GM12878 (cell line): ENCODE measurements at regions of chr1 and their contacts with region 1.

Region 1: GRCh38 chr1:223142795-223143536 is at the start of gene TLR5:
- DNase-seq: peak; percentile 12
- ATAC-seq: peak; percentile 91
- H3K4me3 ChIP-seq: peak within 1 kb of the TSS; percentile 45
- H3K27ac ChIP-seq: no peak within 1 kb of the TSS
- H3K4me1 ChIP-seq: peaks cover 12% of the 10 kb centered on the region
- H3K27me3 ChIP-seq: no peaks in the 10 kb centered on the region
- CTCF ChIP-seq: peak; percentile 40 to 68 (median 44)
- EP300 ChIP-seq: no peak
- POLR2A ChIP-seq: peak; percentile 52; the same call in 1 of the 2 replicates
- RAD21 ChIP-seq: no peak
- polyA plus RNA-seq, gene TLR5: 0.34 to 0.51 TPM

Region 2: DNA sequence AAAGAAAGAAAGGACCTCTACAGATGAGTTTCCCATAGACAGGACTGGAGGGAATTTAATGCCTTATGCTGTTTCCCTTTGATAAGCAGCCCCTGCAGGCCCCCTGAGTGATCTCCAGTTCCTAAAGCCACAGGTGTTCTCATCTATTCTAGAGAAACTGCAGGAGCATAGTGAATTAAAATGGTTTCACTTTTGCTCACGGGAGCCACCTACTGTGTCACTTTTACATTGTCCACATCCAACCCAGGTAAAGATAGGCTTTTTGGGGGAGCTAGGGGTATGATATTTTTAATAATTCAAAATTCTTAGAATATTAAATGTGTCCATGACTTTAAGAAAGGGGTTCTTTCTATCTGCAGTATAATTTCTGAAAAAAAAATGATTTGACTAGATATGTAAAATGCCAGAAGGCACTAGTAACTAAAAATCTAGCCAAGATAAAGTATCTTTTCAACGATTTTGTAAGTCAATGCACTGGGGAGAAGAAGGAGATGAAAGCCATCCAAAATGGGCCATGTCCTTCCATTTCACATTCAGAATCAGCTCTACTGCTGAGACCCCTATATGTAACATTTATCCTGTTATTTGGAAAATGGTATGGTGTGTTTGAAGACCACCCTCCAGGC is 1133.7 kb before region 1 on chr1:
- CTCF ChIA-PET with region 1: no interaction called
- POLR2A ChIA-PET with region 1: no interaction called
- RAD21 ChIA-PET with region 1: no interaction called
- SMC1A ChIA-PET with region 1: no interaction called
- in situ Hi-C with region 1: no loop called
- intact Hi-C with region 1: no loop called
- DNase-seq: peak; percentile 36
- ATAC-seq: peak; percentile 95
- H3K4me3 ChIP-seq: no peak overlapping the region
- H3K27ac ChIP-seq: no peak overlapping the region
- H3K4me1 ChIP-seq: no peaks in the 10 kb centered on the region
- H3K27me3 ChIP-seq: no peaks in the 10 kb centered on the region
- CTCF ChIP-seq: peak; percentile 45 to 59 (median 48); a peak in 5 of 6 replicates
- EP300 ChIP-seq: no peak
- POLR2A ChIP-seq: no peak
- RAD21 ChIP-seq: peak; percentile 74

Region 3: DNA sequence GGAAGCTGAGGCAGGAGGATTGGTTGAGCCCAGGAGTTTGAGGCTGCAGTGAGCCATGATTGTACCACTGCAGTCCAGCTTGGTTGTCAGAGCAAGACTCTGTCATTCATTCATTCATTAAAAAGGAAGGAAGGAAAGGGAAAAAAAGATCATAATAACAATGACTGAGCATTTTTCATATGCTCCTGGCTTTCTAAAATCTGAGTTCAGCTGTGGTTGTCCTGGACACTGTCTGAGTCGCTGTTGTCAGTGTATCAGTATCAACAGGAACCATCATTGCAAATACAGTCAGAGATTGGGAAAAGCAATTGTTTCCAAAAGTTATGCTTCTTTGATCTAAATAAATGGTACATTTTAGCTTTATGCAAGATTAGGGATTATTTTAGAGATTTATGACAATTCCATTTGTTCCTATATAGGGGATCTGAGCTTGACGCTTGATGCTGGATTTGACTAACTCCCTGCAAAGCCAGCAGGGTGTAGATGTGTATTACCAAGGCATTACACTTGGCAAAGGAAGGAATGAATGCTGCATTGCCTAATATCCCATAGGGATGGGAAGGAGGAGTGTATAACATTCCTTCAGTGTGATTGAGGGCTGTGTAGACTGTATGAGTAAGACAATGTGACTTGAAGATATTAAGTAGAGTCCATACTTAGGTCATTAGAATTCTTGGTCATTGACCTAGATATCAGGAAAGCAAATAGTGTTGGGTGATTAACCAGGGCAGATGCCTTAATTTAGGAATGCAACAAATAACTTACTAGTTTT is 227.9 kb before region 1 on chr1:
- CTCF ChIA-PET with region 1: no interaction called
- POLR2A ChIA-PET with region 1: no interaction called
- RAD21 ChIA-PET with region 1: no interaction called
- SMC1A ChIA-PET with region 1: no interaction called
- in situ Hi-C with region 1: no loop called
- intact Hi-C with region 1: no loop called
- DNase-seq: no peak
- ATAC-seq: no peak
- H3K4me3 ChIP-seq: no peak overlapping the region
- H3K27ac ChIP-seq: no peak overlapping the region
- H3K4me1 ChIP-seq: no peaks in the 10 kb centered on the region
- H3K27me3 ChIP-seq: no peaks in the 10 kb centered on the region
- CTCF ChIP-seq: no peak
- EP300 ChIP-seq: no peak
- POLR2A ChIP-seq: no peak
- RAD21 ChIP-seq: no peak

Region 4: DNA sequence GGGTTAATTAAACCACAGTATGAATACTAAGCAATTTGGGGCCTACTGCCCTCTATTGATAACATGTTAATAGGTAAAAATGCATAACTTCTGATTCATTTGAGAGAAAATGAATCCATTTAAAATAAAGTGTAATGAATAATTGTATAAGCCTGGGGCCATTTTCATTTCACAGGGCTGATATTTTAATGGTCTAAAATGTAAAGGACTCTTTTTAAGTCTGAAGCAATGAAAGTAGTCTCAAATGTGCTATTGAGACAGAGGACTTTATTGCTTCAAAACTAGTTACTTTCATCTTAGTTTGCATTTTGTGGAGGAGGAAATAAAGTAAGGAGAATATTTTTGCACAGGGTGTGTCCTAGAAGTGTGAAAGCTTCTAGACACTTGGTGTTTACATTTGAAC is 155.3 kb before region 1 on chr1:
- CTCF ChIA-PET with region 1: no interaction called
- POLR2A ChIA-PET with region 1: no interaction called
- RAD21 ChIA-PET with region 1: no interaction called
- SMC1A ChIA-PET with region 1: no interaction called
- in situ Hi-C with region 1: no loop called
- intact Hi-C with region 1: no loop called
- DNase-seq: no peak
- ATAC-seq: no peak
- H3K4me3 ChIP-seq: no peak overlapping the region
- H3K27ac ChIP-seq: no peak overlapping the region
- H3K4me1 ChIP-seq: no peaks in the 10 kb centered on the region
- H3K27me3 ChIP-seq: no peaks in the 10 kb centered on the region
- CTCF ChIP-seq: no peak
- EP300 ChIP-seq: no peak
- POLR2A ChIP-seq: no peak
- RAD21 ChIP-seq: no peak

Region 5: GRCh38 chr1:223102797-223103533 is 40.0 kb before region 1 on chr1:
- CTCF ChIA-PET with region 1: no interaction called
- POLR2A ChIA-PET with region 1: no interaction called
- RAD21 ChIA-PET with region 1: no interaction called
- SMC1A ChIA-PET with region 1: no interaction called
- in situ Hi-C with region 1: no loop called
- intact Hi-C with region 1: no loop called
- DNase-seq: no peak
- ATAC-seq: no peak
- H3K4me3 ChIP-seq: no peak overlapping the region
- H3K27ac ChIP-seq: no peak overlapping the region
- H3K4me1 ChIP-seq: no peaks in the 10 kb centered on the region
- H3K27me3 ChIP-seq: no peaks in the 10 kb centered on the region
- CTCF ChIP-seq: no peak
- EP300 ChIP-seq: no peak
- POLR2A ChIP-seq: no peak
- RAD21 ChIP-seq: no peak

Region 6: DNA sequence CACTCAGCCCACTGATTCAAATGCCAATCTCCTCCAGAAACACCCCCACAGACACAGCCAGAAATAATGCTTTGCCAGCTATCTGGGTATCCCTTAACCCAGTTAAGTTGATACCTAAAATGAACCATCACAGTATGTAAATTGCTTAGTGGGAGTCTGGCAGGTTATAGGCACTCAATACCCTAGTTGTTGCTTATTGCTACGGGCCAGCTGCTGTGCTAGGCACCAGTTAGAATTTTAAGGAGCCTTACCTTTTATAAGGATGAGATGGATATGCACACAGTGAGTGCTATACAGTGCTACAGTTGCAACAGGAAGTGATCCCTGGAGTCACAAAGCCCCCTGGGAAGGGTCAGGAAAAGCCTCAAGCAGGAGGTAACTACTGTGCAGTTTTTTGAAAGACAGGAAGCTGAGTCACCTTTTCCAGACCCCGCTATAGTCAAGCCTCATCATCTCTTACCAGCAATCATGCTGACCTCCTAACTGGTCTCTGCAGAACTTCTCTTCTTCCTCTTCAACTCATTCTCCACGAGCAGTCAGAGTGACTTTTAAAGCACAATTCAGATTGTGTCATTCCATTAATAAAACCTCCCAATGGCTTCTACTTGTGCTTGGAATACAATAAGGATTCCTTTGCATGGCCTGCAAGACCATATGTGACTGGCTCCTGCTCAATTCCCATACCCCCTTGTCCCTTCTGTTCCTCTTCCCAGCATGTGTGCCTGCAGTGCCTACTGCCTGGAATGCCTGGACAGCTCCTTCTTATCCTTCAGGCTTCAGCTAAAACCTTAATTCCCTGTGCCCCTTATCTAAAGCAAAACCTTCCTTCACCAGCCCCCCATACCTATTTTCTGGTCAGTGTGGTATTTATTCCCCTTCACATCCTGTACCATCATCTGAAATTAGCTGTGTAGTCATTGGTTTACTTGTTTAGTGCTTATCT is 10.5 kb after region 1 on chr1:
- CTCF ChIA-PET with region 1: interaction called, 8 read pairs
- POLR2A ChIA-PET with region 1: interaction called, 10 read pairs
- RAD21 ChIA-PET with region 1: interaction called, 5 read pairs
- SMC1A ChIA-PET with region 1: interaction called, 9 read pairs
- in situ Hi-C with region 1: no loop called
- intact Hi-C with region 1: no loop called
- DNase-seq: no peak
- ATAC-seq: peak; percentile 28; the same call in 2 of the 3 replicates
- H3K4me3 ChIP-seq: no peak overlapping the region
- H3K27ac ChIP-seq: no peak overlapping the region
- H3K4me1 ChIP-seq: no peaks in the 10 kb centered on the region
- H3K27me3 ChIP-seq: no peaks in the 10 kb centered on the region
- CTCF ChIP-seq: no peak
- EP300 ChIP-seq: no peak
- POLR2A ChIP-seq: no peak
- RAD21 ChIP-seq: no peak

Region 7: GRCh38 chr1:223161321-223161720 is 18.4 kb after region 1 on chr1:
- CTCF ChIA-PET with region 1: interaction called, 8 read pairs
- POLR2A ChIA-PET with region 1: interaction called, 5 read pairs
- RAD21 ChIA-PET with region 1: interaction called, 11 read pairs
- SMC1A ChIA-PET with region 1: interaction called, 9 read pairs
- in situ Hi-C with region 1: no loop called
- intact Hi-C with region 1: no loop called
- DNase-seq: no peak
- ATAC-seq: peak; percentile 74
- H3K4me3 ChIP-seq: no peak overlapping the region
- H3K27ac ChIP-seq: no peak overlapping the region
- H3K4me1 ChIP-seq: no peaks in the 10 kb centered on the region
- H3K27me3 ChIP-seq: peaks cover 0 to 7% of the 10 kb centered on the region in 2 experiments; a peak in 1 of 4 replicates
- CTCF ChIP-seq: 0 out of 6 replicates have a peak, but pooled peaks of 1 of the 3 experiments have one; percentile 19
- EP300 ChIP-seq: no peak
- POLR2A ChIP-seq: no peak
- RAD21 ChIP-seq: no peak

Region 8: GRCh38 chr1:223175032-223175431 is 32.1 kb after region 1 on chr1:
- CTCF ChIA-PET with region 1: interaction called, 21 read pairs
- POLR2A ChIA-PET with region 1: interaction called, 7 read pairs
- RAD21 ChIA-PET with region 1: interaction called, 27 read pairs
- SMC1A ChIA-PET with region 1: interaction called, 47 read pairs
- in situ Hi-C with region 1: no loop called
- intact Hi-C with region 1: no loop called
- DNase-seq: no peak
- ATAC-seq: peak; percentile 85
- H3K4me3 ChIP-seq: no peak overlapping the region
- H3K27ac ChIP-seq: no peak overlapping the region
- H3K4me1 ChIP-seq: no peaks in the 10 kb centered on the region
- H3K27me3 ChIP-seq: no peaks in the 10 kb centered on the region; a peak in 1 of 4 replicates
- CTCF ChIP-seq: peak in 2 of 3 experiments; percentile 7 to 41; a peak in 1 of 6 replicates
- EP300 ChIP-seq: no peak
- POLR2A ChIP-seq: no peak
- RAD21 ChIP-seq: peak; percentile 19; the same call in 1 of the 2 replicates

Region 9: DNA sequence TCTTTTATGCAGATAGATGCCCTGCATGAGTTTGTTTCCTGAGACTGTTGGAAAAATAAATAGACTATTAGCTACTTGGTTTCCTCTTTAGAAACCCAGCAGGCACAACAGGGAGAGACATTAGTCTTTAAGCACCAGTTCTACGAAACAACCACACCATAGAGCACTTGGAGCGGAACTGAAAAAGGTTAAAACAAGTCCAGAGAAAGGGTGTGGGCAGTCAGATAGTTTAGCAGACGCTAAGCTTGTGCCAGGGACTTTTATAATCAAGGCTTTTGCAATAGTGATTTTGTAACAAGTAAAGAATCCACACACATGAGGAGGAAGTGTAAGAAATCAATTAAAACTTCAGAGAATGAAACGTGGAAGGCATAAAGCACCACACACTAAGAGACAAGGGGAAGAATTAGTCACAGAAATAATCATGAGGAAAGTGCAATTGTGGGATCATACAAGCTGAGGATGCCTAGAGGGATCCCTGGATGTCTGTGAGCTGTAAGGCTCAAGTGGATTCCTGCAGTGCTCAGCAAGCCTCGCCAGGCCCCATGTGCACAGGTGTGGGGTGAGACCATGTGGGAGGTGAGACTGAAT is 37.9 kb after region 1 on chr1:
- CTCF ChIA-PET with region 1: interaction called, 21 read pairs
- POLR2A ChIA-PET with region 1: interaction called, 8 read pairs
- RAD21 ChIA-PET with region 1: interaction called, 27 read pairs
- SMC1A ChIA-PET with region 1: interaction called, 47 read pairs
- in situ Hi-C with region 1: no loop called
- intact Hi-C with region 1: no loop called
- DNase-seq: peak; percentile 12
- ATAC-seq: peak; percentile 95
- H3K4me3 ChIP-seq: no peak overlapping the region
- H3K27ac ChIP-seq: no peak overlapping the region
- H3K4me1 ChIP-seq: no peaks in the 10 kb centered on the region
- H3K27me3 ChIP-seq: peaks cover 0 to 3% of the 10 kb centered on the region in 2 experiments; a peak in 2 of 4 replicates
- CTCF ChIP-seq: no peak
- EP300 ChIP-seq: peak in 1 of 2 experiments; percentile 68; a peak in 2 of 4 replicates
- POLR2A ChIP-seq: no peak
- RAD21 ChIP-seq: no peak

Region 10: DNA sequence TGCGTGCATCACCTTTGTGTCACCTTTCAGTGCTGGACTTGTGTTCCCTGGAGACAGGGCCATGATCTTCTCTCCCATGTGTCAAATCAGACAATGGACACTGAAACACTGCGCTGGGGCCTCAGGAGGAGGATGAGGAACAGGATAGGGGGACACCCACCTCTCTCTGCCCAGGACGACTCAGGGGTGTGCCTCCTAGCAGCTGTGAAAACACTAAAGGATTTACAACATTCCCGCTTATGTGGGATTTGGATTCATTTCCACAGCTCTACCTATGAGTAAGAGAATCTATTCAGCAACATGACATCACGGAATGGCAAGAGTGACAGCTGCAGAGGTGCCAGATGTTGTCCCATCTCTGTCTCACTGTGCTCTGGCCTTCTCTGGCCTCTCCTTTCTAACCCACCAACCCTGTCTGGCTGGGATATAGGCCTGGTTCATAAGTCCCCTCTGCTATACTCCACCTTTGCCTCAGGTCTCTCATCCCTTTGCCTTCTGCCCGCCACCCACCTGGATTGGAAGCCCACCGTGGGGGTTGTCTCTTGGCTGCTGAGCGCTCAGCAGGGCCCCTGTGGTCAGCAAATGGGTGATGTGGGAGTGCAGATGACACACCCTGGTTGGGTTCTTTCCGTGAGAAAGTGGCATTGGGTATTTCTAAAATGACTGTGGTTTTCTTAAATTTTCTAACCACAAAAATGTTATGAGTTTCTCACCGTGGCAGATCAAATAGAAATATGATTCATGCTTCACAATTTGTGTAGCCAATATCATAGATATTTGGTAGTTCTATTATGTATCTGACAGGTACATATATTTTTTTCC is 47.1 kb after region 1 on chr1:
- CTCF ChIA-PET with region 1: interaction called, 7 read pairs
- POLR2A ChIA-PET with region 1: interaction called, 5 read pairs
- RAD21 ChIA-PET with region 1: interaction called, 5 read pairs
- SMC1A ChIA-PET with region 1: interaction called, 7 read pairs
- in situ Hi-C with region 1: no loop called
- intact Hi-C with region 1: loop called (anchors 2 kb)
- DNase-seq: peak; percentile 30
- ATAC-seq: peak; percentile 90
- H3K4me3 ChIP-seq: no peak overlapping the region
- H3K27ac ChIP-seq: no peak overlapping the region
- H3K4me1 ChIP-seq: no peaks in the 10 kb centered on the region; the same call in 1 of the 2 replicates
- H3K27me3 ChIP-seq: no peaks in the 10 kb centered on the region
- CTCF ChIP-seq: no peak
- EP300 ChIP-seq: peak; percentile 77 to 91; a peak in 3 of 4 replicates
- POLR2A ChIP-seq: no peak
- RAD21 ChIP-seq: no peak